HEK293 (cell line): ENCODE measurements at regions of chr10 and their contacts with region 1.

Region 1: GRCh38 chr10:35195361-35196306 is 69.0 kb downstream of the CREM start:
- H3K4me3 ChIP-seq: peak overlapping the region; percentile 31
- H3K27ac ChIP-seq: peak overlapping the region; percentile 33
- H3K4me1 ChIP-seq: no peaks in the 10 kb centered on the region
- CTCF ChIP-seq: no peak; the same call in 1 of the 2 replicates

Region 2: GRCh38 chr10:35119378-35119777 is 76.3 kb before region 1 on chr10:
- CTCF ChIA-PET with region 1: interaction called, 18 read pairs
- POLR2A ChIA-PET with region 1: interaction called, 4 read pairs
- H3K4me3 ChIP-seq: no peak overlapping the region
- H3K27ac ChIP-seq: no peak overlapping the region
- H3K4me1 ChIP-seq: no peaks in the 10 kb centered on the region
- CTCF ChIP-seq: no peak

Region 3: GRCh38 chr10:35126530-35127296 is 68.9 kb before region 1 on chr10 and contains the start of gene CREM:
- CTCF ChIA-PET with region 1: interaction called, 28 read pairs
- POLR2A ChIA-PET with region 1: interaction called, 47 read pairs
- H3K4me3 ChIP-seq: peak within 1 kb of the TSS; percentile 76
- H3K27ac ChIP-seq: peak within 1 kb of the TSS; percentile 97
- H3K4me1 ChIP-seq: peaks cover 11% of the 10 kb centered on the region
- CTCF ChIP-seq: peak; percentile 89

Region 4: GRCh38 chr10:35208536-35208935 is 12.9 kb after region 1 on chr10:
- CTCF ChIA-PET with region 1: interaction called, 15 read pairs
- POLR2A ChIA-PET with region 1: no interaction called
- H3K4me3 ChIP-seq: no peak overlapping the region
- H3K27ac ChIP-seq: no peak overlapping the region
- H3K4me1 ChIP-seq: peaks cover 4% of the 10 kb centered on the region; the same call in 1 of the 2 replicates
- CTCF ChIP-seq: no peak

Region 5: GRCh38 chr10:35218339-35218955 is 22.8 kb after region 1 on chr10:
- CTCF ChIA-PET with region 1: interaction called, 19 read pairs
- POLR2A ChIA-PET with region 1: interaction called, 3 read pairs
- H3K4me3 ChIP-seq: no peak overlapping the region
- H3K27ac ChIP-seq: no peak overlapping the region
- H3K4me1 ChIP-seq: no peaks in the 10 kb centered on the region
- CTCF ChIP-seq: peak; percentile 61